Breast epithelium (tissue), 4 donors: ENCODE measurements at regions of chr17 and their contacts with region 1.

Region 1: DNA sequence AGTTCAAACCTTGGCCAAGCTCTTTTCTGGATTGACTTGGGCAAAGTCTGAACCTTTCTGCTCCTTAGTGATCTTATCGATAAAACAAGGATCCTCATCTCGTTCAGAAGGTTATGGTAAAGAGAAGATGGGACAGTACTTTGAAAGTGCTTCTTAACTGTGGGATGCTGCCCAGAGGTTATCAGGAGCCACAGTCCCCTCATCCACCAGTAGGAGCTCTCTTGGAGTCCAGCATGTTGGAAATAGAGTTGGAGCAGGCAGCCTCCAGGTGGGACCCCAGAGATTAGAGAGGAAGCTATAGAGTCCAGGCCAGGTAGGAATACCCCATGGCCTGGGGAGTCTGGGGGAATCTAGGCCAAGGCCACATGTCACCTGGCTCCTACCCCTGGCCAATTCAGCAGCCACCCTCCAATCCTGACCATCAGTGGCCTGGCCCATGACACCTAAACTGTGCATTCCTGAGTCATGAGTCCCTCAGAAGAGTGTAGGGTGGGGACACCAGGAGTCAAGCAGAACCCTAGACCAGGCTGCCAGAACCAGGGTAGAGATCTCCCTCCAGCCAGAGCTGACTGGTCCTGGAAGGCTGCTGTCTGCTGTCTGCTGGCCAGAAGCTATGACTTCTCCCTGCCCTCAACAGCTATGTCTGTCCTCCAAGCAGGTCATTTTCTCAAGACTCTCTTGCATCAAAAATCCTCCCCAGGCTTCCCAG is 144.3 kb downstream of the AIPL1 start:
- DNase-seq: no peak
- H3K4me3 ChIP-seq: no peak overlapping the region
- H3K27ac ChIP-seq: no peak overlapping the region
- H3K4me1 ChIP-seq: no peaks in the 10 kb centered on the region
- H3K27me3 ChIP-seq: peaks cover 0 to 6% of the 10 kb centered on the region in 2 donors
- CTCF ChIP-seq: no peak
- POLR2A ChIP-seq: no peak

Region 2: GRCh38 chr17:6303664-6304063 is 13.0 kb after region 1 on chr17:
- intact Hi-C with region 1: loop called (anchors 1 kb)
- DNase-seq: no peak
- H3K4me3 ChIP-seq: no peak overlapping the region
- H3K27ac ChIP-seq: no peak overlapping the region
- H3K4me1 ChIP-seq: no peaks in the 10 kb centered on the region
- H3K27me3 ChIP-seq: peaks cover 0 to 16% of the 10 kb centered on the region in 2 donors
- CTCF ChIP-seq: no peak
- POLR2A ChIP-seq: no peak